ENCODE measurements at regions of chr2 and their contacts with region 1.

Region 1: GRCh38 chr2:99707592-99707991 is 217.8 kb upstream of the REV1 start:
- DNase-seq: no peak

Region 2: GRCh38 chr2:99636144-99637034 is 71.2 kb before region 1 on chr2:
- intact Hi-C with region 1: loop called (anchors 5 kb)
- DNase-seq: peak; percentile 94